A549 (cell line): ENCODE measurements at regions of chr7 and their contacts with region 1.

Region 1: DNA sequence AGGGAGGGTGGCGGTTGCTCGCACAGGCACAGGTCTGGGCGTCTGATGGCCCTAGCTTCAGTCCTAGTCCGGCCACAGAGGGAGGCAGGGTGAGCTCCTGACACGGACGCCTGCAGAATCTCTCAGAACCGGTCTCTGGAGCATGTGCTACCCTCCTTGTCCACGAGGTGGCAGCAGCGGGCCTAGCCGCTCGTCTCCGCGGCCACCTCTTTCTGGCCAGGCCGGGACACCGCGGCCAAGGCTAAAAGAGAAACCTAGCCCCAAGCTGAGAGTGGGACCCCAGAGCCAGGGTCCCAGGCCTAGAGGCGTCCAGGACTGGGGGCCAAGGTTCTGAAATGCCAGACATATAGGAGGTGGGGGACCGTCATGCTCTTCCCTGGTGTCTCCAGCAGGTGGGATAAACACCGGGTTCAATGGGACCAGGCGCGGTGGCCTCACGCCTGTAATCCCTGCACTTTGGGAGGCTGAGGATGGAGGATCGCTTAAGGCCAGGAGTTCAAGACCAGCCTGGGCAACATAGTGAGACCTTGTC is 3.2 kb upstream of the LAT2 start:
- DNase-seq: peak; percentile 77
- ATAC-seq: peak; percentile 79 to 81
- H3K4me3 ChIP-seq: no peak overlapping the region
- H3K27ac ChIP-seq: peak overlapping the region; percentile 54 to 70; a peak in 4 of 6 replicates
- H3K4me1 ChIP-seq: peaks cover 19% of the 10 kb centered on the region
- CTCF ChIP-seq: peak; percentile 96
- EP300 ChIP-seq: no peak
- POLR2A ChIP-seq: no peak
- RAD21 ChIP-seq: peak; percentile 91 to 95

Region 2: DNA sequence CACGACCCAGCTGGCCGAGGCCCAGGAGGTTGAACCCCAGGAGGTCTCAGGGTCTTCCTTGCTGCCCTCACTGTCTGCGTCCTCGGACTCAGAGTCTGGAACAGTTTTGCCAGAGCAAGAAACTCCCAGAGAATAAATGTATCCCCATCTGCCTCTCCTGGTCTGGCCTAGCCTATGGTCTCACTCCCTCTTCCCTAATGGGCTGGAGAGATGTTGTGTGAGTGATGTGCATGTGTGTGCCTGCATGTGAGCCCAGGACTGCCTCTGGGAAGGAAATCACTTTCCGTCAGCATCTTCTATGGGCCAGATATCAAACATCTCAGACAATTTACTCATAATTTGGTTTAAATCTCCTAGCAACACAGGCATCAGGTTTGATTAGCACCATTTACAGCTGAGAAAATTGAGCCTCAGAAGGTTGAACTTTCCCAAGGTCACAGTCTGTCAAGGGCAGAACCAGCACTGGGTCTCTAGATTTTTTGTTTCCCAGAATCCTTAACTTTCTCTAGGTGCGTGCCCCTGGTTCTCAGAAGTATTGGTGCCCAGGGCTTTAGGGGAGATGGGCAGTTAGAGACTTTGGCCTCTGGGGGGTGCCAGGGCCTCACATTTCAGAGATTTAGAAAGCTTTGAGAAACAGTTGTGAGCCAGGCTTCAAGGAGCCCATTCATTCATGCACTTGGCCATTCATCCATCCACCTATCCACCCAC is 340.8 kb before region 1 on chr7:
- CTCF ChIA-PET with region 1: interaction called, 10 read pairs
- POLR2A ChIA-PET with region 1: interaction called, 6 read pairs
- DNase-seq: peak; percentile 58 to 63
- ATAC-seq: peak; percentile 76 to 86; a peak in 4 of 6 replicates
- H3K4me3 ChIP-seq: no peak overlapping the region
- H3K27ac ChIP-seq: no peak overlapping the region
- H3K4me1 ChIP-seq: peaks cover 10% of the 10 kb centered on the region; the same call in 2 of the 3 replicates
- CTCF ChIP-seq: peak; percentile 81
- EP300 ChIP-seq: no peak
- POLR2A ChIP-seq: no peak
- RAD21 ChIP-seq: peak; percentile 88 to 91

Region 3: DNA sequence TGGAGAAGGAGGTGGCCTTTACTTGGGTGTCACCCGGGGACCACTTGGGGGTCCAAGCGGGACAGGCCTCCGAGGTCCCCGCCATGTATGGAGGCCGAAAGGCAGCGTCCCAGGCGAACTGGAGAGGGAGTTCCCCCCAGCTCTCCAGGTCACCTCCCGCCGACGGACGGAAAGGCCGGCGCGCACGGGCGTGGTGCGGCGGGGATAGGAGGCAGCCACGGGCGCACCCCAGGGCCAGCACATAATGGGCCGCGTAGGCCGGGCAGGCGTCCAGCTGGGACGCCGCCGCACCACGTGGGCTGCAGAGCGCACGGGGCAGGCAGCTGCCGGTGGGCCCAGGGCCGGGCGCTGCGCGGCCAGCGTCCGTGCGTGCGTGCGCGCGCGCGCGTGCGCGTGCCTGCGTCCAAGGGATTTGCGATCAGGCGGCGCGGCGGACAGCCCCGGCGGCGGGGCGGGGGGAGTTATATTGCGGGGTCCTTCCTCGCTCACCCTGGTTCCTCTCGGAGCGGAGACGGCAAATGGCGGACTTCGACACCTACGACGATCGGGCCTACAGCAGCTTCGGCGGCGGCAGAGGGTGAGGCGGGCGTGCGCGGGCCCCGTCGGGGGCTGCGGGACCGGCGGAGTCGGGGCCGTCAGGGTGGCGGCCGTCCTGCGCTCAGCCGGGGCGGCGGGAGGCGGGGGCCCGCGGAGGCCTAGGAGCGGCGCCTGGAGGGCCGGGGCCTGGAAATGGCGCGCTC is 32.6 kb before region 1 on chr7 and contains the start of gene EIF4H:
- CTCF ChIA-PET with region 1: interaction called, 39 read pairs
- POLR2A ChIA-PET with region 1: interaction called, 7 read pairs
- DNase-seq: peak; percentile 88 to 96
- ATAC-seq: peak; percentile 96 to 97
- H3K4me3 ChIP-seq: peak within 1 kb of the TSS; percentile 96
- H3K27ac ChIP-seq: peak within 1 kb of the TSS; percentile 94 to 99
- H3K4me1 ChIP-seq: peaks cover 38% of the 10 kb centered on the region
- CTCF ChIP-seq: no peak
- EP300 ChIP-seq: no peak
- POLR2A ChIP-seq: peak; percentile 78
- RAD21 ChIP-seq: no peak
- polyA plus RNA-seq, gene EIF4H: 300 and 364 TPM in 2 replicates

Region 4: GRCh38 chr7:74217455-74218342 is 11.0 kb after region 1 on chr7:
- CTCF ChIA-PET with region 1: interaction called, 92 read pairs
- POLR2A ChIA-PET with region 1: interaction called, 4 read pairs
- DNase-seq: no peak
- ATAC-seq: no peak
- H3K4me3 ChIP-seq: no peak overlapping the region
- H3K27ac ChIP-seq: no peak overlapping the region
- H3K4me1 ChIP-seq: peaks cover 18% of the 10 kb centered on the region
- CTCF ChIP-seq: no peak
- EP300 ChIP-seq: no peak
- POLR2A ChIP-seq: no peak
- RAD21 ChIP-seq: no peak

Region 5: GRCh38 chr7:74246497-74246896 is 39.8 kb after region 1 on chr7:
- CTCF ChIA-PET with region 1: interaction called, 23 read pairs
- POLR2A ChIA-PET with region 1: no interaction called
- DNase-seq: no peak
- ATAC-seq: no peak
- H3K4me3 ChIP-seq: no peak overlapping the region
- H3K27ac ChIP-seq: no peak overlapping the region
- H3K4me1 ChIP-seq: no peaks in the 10 kb centered on the region
- CTCF ChIP-seq: no peak
- EP300 ChIP-seq: no peak
- POLR2A ChIP-seq: no peak
- RAD21 ChIP-seq: no peak

Region 6: GRCh38 chr7:74343281-74344127 is 136.8 kb after region 1 on chr7:
- CTCF ChIA-PET with region 1: interaction called, 10 read pairs
- POLR2A ChIA-PET with region 1: no interaction called
- DNase-seq: peak; percentile 71 to 91
- ATAC-seq: peak; percentile 92 to 99
- H3K4me3 ChIP-seq: no peak overlapping the region
- H3K27ac ChIP-seq: peak overlapping the region; percentile 83 to 89
- H3K4me1 ChIP-seq: peaks cover 20% of the 10 kb centered on the region
- CTCF ChIP-seq: no peak
- EP300 ChIP-seq: no peak
- POLR2A ChIP-seq: no peak
- RAD21 ChIP-seq: no peak